ENCODE measurements at regions of chr4 and their contacts with region 1.

Region 1: GRCh38 chr4:26319467-26319948 is 1.3 kb upstream of the RBPJ start:
- H3K4me3 Mint-ChIP-seq: peak overlapping the region; percentile 94
- H3K27ac Mint-ChIP-seq: peak overlapping the region; percentile 98
- H3K4me1 Mint-ChIP-seq: peaks cover 42% of the 10 kb centered on the region
- H3K27me3 Mint-ChIP-seq: no peaks in the 10 kb centered on the region

Region 2: DNA sequence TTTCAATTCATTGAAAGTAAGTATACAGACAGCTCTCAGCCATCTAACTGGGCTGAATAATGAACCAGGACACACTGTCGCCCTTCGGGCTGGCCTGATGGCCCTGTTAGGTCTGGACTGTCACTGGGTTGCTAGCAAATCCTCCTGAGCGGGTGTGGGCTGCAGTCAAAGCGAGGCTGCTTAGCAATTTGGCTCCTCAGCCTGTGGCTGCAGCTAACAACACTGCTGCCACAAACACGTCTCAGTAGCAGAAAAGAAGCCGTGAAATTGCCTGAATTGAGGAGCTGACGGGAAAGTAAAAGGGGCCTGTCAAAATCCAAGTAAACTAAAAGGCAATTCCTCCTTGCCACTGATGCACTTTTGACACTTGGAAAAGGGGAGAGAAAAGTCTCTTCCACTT is 332.7 kb before region 1 on chr4:
- intact Hi-C with region 1: loop called (anchors 5 kb)
- H3K4me3 Mint-ChIP-seq: no peak overlapping the region
- H3K27ac Mint-ChIP-seq: no peak overlapping the region
- H3K4me1 Mint-ChIP-seq: peaks cover 73% of the 10 kb centered on the region
- H3K27me3 Mint-ChIP-seq: peaks cover 10% of the 10 kb centered on the region

Region 3: DNA sequence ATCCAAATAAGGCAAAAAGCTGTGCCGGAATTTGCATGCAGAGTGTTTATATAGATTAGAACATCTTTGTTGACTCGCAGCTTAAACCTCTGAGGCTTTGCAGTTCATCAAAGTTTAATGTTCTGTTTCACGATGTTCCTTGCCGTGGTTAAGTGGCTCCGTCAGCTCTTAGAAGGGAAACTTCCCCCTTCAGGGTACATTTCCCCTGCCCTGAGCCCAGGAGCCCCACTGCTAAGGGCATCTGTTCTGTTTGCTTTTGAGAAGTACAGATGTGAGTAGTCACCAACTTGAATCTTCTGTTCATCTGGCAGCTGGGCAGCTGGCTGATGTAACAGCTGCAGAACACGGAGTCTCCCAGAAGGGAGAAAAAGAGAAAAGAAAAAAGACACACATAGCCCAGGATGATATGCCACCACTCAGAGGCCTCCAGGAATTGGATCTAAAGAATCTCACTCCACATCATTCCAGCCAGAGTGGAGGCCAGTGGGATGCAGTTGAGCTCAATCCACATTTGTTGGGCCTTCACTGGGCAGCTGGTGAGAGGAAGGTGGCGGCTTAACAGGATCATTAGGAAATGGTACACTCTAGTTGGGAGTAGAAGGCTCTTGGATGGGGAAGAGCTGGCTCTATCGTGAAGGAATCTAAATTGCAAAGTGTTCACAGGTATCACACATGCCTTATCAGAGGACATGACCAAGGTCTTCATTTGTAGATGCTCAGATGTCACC is 177.4 kb before region 1 on chr4:
- intact Hi-C with region 1: loop called (anchors 5 kb)
- H3K4me3 Mint-ChIP-seq: peak overlapping the region; percentile 58
- H3K27ac Mint-ChIP-seq: peak overlapping the region; percentile 99
- H3K4me1 Mint-ChIP-seq: peaks cover 90% of the 10 kb centered on the region
- H3K27me3 Mint-ChIP-seq: peaks cover 2% of the 10 kb centered on the region

Region 4: GRCh38 chr4:26179316-26179760 is 140.2 kb before region 1 on chr4:
- intact Hi-C with region 1: no loop called
- H3K4me3 Mint-ChIP-seq: no peak overlapping the region
- H3K27ac Mint-ChIP-seq: no peak overlapping the region
- H3K4me1 Mint-ChIP-seq: peaks cover 41% of the 10 kb centered on the region
- H3K27me3 Mint-ChIP-seq: peaks cover 4% of the 10 kb centered on the region

Region 5: GRCh38 chr4:26217961-26218676 is 101.4 kb before region 1 on chr4:
- intact Hi-C with region 1: loop called (anchors 1 kb)
- H3K4me3 Mint-ChIP-seq: peak overlapping the region; percentile 58
- H3K27ac Mint-ChIP-seq: peak overlapping the region; percentile 95
- H3K4me1 Mint-ChIP-seq: peaks cover 79% of the 10 kb centered on the region
- H3K27me3 Mint-ChIP-seq: peaks cover 2% of the 10 kb centered on the region

Region 6: DNA sequence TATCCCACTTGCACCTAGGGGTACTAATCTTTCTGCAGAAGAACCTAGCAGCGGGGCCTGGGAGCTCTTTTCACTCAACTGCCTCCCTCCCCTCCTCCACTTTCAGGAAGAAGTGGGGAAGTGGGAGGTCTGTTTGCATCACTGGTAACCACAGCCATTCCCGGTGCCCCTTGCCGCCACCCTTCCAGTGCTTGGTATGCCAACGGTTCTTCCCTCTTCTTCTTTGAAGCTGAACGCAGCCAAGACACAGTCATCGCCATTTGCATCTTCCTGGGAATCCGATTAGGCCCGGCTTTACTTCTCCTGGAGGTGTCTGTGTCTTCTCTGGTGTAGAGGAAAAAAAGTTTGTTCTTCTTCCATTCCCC is 45.9 kb before region 1 on chr4:
- intact Hi-C with region 1: loop called (anchors 5 kb)
- H3K4me3 Mint-ChIP-seq: peak overlapping the region; percentile 72
- H3K27ac Mint-ChIP-seq: peak overlapping the region; percentile 90
- H3K4me1 Mint-ChIP-seq: peaks cover 74% of the 10 kb centered on the region
- H3K27me3 Mint-ChIP-seq: no peaks in the 10 kb centered on the region

Region 7: DNA sequence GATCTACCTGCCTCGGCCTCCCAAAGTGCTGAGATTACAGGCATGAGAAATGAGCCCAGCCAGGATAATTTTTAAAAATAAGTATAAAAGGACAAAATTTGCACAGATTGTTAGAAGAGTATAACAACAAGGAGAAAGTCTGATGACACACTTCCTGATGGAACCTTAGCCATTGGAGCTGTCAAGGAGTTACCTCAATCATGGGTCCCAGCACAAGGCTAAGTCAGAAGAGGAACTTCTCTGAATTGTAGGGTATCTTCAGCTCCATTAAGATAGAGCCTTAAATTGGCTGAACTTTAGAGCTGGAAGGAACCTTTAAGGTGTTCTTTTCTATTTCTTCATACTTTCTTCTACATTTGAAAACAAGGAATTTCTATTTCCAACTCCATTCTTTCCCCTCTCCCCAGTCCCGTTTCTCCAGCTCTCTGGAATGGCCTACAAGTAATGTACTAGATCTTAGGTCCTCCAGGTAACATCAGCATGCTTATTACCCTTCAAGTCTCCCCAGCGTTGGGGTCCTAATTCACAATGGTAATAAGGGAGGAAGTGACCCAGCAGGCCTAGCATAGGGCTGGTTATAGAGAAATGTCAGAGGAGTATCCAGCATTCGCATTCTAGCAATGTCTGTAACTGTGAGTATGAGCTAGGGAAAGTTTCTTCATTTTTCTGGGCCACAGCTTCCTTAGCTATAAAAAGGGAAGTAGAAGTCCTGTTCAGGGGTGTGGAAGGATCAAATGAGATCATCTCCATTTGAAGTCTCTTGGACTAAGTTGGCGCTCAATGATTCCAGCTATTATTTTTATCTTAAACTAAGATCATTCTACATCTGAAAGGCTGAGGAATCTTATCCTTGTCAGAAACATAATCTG is 17.2 kb before region 1 on chr4:
- intact Hi-C with region 1: loop called (anchors 2 kb)
- H3K4me3 Mint-ChIP-seq: no peak overlapping the region
- H3K27ac Mint-ChIP-seq: peak overlapping the region; percentile 89
- H3K4me1 Mint-ChIP-seq: peaks cover 31% of the 10 kb centered on the region
- H3K27me3 Mint-ChIP-seq: no peaks in the 10 kb centered on the region